GM18951 (cell line): ENCODE measurements at regions of chr3 and their contacts with region 1.

Region 1: GRCh38 chr3:129633751-129634392 is 27.4 kb upstream of the PLXND1 start:
- POLR2A ChIP-seq: no peak

Region 2: DNA sequence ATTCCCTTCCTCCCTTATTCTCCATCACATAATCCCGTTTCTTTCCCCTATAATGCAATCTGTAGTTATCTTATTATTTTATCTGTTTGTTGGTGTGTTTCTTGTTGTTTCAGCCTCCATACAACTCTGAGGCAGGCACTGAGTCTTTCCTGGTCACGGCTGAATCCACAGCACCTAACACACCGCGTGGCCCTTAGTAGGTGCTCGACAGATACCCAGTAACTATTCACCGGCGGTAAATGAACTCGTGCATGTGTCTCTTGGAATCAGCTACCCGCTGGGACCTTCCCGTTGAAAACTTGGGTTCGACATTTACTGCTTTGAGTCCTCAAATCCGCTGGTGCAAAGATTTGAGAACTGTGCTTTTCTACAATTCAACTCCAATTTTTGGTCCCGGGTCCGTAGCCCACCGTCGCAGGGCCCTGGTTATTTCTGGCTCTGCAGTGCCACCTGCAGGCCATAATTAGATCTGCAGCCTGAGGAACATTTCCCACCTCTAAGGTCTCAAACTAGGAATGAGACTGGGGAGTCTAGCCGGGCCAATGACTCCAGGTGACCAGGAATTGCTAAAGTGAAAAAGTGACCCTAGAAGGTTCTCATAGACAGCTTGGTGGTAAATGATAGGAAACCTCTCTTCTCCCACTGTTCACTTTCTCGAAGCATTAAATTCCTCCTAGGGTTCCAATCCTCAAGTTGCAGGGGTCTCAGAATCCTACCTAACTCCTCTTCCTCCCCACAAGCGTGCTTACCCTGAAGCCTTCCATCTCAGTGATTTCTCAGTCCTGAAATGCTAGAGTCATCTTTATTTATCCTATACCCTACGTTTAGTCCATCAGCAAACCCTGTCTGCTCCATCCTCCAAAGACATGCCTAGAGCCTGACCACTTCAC is 300.6 kb after region 1 on chr3:
- in situ Hi-C with region 1: loop called (anchors 10 kb)
- POLR2A ChIP-seq: no peak

Region 3: GRCh38 chr3:130341388-130341787 is 707.5 kb after region 1 on chr3:
- in situ Hi-C with region 1: no loop called
- POLR2A ChIP-seq: no peak